ENCODE measurements at regions of chr3 and their contacts with region 1.

Region 1: DNA sequence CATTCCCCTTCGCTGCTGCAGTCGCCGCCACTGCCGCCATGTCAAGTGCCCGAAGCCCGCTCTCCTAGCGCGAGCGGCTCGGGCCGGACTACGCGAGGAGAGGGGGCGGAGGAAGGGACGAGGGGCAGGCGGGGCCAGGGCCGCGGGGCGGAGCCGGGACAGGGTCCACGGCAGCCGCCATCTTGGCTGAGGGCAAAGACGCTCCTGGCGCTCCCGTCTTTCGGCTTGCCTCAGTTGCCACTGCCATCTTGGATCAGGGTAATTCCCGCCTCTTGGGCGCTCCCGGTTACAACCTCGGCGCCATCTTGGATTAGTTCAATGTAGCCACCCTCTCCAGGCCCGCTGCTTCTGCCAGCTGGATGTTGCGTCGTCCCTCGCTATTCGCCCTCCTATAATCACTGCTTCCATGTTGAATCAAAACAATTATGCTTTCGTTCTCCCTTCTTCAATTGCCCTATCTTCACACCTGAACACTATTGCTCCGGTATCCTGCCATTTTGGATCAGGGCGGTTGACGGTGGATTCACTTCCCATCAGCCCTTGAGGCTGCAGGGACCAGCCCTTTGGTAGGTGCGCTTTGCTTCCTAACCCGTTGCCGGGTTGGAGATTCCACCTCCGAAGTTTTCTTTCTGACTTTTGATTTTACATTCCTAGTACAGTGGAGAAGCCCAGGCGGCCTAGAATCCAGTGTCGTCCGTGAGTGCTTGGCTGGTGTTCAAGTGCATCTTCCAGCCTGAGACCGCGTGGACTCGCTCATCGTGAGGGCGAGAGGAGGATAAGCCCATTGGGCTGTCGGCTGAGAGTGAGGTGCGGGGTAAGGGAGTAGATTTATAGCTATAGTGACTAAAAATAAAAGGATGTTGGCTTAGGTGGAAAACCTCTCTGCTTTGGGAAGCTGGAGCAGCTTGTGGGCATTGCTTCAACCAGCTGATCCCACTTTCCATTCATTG is at the start of gene HACD2:
- DNase-seq: peak; percentile 87 to 96 (median 90)
- ATAC-seq: peak; percentile 96
- H3K4me3 ChIP-seq: peak within 1 kb of the TSS; percentile 98
- H3K4me3 Mint-ChIP-seq: peak within 1 kb of the TSS in 3 of 10 donors; percentile 87 to 90 (median 89)
- H3K27ac ChIP-seq: peak within 1 kb of the TSS; percentile 79
- H3K27ac Mint-ChIP-seq: peak within 1 kb of the TSS; percentile 44 to 93 (median 83)
- H3K4me1 ChIP-seq: peaks cover 8 to 13% of the 10 kb centered on the region in 2 donors
- H3K4me1 Mint-ChIP-seq: peaks cover 14 to 32% (median 30%) of the 10 kb centered on the region in 7 donors
- H3K27me3 ChIP-seq: no peaks in the 10 kb centered on the region
- H3K27me3 Mint-ChIP-seq: no peaks in the 10 kb centered on the region
- total RNA-seq, gene HACD2: 15.9 to 28.3 (median 24.0) TPM

Region 2: DNA sequence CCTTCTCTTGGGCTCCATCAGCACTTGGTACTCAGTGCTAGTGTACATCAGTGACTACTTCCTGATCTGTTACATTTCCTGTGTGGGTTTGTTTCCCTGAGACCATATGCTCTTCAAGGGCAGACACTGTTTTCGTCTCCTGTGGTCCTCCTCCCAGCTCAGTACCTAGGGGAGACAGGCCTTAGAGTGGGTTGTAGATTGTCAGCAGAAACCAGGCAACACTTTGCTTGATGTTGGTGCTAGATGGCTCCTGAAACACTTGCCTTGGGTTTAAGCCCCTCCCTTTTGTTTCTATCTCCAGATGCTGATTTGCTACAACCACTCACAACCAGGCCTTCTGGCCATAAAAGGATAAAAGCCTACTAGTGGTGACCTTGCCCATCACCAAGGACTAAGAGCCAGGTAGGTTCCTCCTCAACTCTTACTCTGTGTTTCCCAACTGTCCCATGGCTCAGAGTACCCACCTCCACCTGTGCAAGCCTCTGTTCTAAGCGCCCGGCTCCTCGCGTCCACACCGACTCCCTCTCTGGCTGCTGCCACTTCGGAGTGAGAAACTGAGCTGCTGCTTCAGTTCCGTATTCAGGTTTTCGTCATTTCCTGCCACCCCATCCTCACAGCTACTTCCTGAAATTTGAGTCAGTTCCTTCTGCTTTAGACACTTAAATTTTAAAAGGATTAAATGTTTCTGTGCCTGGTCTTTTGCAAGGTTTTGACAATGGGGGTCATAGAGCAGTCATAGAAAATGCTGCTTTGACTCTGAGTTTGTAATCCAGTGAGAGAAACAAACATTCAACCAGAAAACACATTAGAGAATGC is 1924.7 kb before region 1 on chr3 and contains the start of gene HCLS1:
- CTCF ChIA-PET with region 1: no interaction called
- POLR2A ChIA-PET with region 1: interaction called, 4 read pairs
- intact Hi-C with region 1: loop called in 1 of 2 experiments (anchors 2 kb)
- DNase-seq: peak; percentile 60 to 87 (median 79)
- ATAC-seq: peak; percentile 87
- H3K4me3 ChIP-seq: peak within 1 kb of the TSS; percentile 90
- H3K4me3 Mint-ChIP-seq: peak within 1 kb of the TSS; percentile 82 to 99 (median 95)
- H3K27ac ChIP-seq: peak within 1 kb of the TSS; percentile 90
- H3K27ac Mint-ChIP-seq: peak within 1 kb of the TSS; percentile 96 to 100 (median 99)
- H3K4me1 ChIP-seq: peaks cover 34 to 41% of the 10 kb centered on the region in 2 donors
- H3K4me1 Mint-ChIP-seq: peaks cover 41 to 68% (median 57%) of the 10 kb centered on the region in 7 donors
- H3K27me3 ChIP-seq: no peaks in the 10 kb centered on the region
- H3K27me3 Mint-ChIP-seq: no peaks in the 10 kb centered on the region
- total RNA-seq, gene HCLS1: 275 to 357 (median 311) TPM

Region 3: GRCh38 chr3:122793568-122794416 is 791.5 kb before region 1 on chr3 and contains the start of gene HSPBAP1:
- CTCF ChIA-PET with region 1: no interaction called
- POLR2A ChIA-PET with region 1: no interaction called
- intact Hi-C with region 1: loop called in 1 of 2 experiments (anchors 1 kb)
- DNase-seq: peak; percentile 71 to 90 (median 86)
- ATAC-seq: peak; percentile 77
- H3K4me3 ChIP-seq: peak within 1 kb of the TSS; percentile 83
- H3K4me3 Mint-ChIP-seq: peak within 1 kb of the TSS in 5 of 10 donors; percentile 91 to 97 (median 95)
- H3K27ac ChIP-seq: peak within 1 kb of the TSS; percentile 82
- H3K27ac Mint-ChIP-seq: peak within 1 kb of the TSS in 6 of 9 donors; percentile 79 to 99 (median 96)
- H3K4me1 ChIP-seq: peaks cover 22 to 34% of the 10 kb centered on the region in 2 donors
- H3K4me1 Mint-ChIP-seq: peaks cover 20 to 29% (median 27%) of the 10 kb centered on the region in 7 donors
- H3K27me3 ChIP-seq: no peaks in the 10 kb centered on the region
- H3K27me3 Mint-ChIP-seq: no peaks in the 10 kb centered on the region
- total RNA-seq, gene HSPBAP1: 9.0 to 31.5 (median 23.3) TPM

Region 4: DNA sequence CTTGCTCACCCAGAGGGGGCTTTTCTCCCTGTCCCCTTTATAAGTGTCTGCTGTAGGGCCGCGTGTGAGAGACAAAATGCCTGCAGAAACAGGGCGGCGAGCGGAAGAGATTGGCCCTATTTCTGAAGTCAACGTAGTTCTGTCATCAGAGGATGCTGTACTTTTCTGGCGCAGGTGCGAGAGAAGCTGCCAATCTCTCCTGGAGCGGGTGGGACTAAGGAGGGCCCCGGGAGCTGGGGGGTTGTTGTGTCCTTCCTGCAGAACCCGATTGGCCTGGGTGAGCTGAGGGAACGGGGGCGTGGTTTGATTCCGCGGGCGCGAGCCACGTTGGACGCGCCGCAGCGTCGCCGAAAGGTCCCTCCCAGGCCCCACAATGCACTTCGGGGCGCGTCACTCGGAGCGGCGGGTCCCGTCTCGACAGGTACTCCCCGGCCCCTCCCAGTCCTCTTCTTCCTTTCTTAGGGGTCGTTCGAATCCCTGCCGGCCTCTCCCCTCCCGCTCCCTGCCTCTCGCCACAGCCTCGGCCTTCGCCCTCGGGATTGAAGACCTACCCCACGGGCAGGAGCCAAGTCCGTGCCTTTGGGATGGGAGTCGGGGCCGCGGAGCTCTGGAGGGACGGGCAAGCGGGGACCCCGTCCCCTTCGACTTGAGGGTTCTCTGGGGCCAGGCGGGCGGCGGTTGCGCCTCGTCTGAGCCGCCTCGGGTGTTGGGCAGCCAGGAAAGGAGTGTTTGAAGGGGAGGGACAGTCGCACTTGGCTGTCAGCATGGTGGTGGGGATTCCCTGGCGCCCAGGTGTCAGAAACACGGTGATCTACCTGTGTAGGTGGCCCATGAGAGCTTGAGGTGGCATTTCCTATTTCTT is 383.5 kb before region 1 on chr3 and contains the start of gene SEC22A:
- CTCF ChIA-PET with region 1: no interaction called
- POLR2A ChIA-PET with region 1: interaction called, 11 read pairs
- intact Hi-C with region 1: loop called (anchors 1 kb)
- DNase-seq: peak; percentile 89 to 99 (median 97)
- ATAC-seq: peak; percentile 97
- H3K4me3 ChIP-seq: peak within 1 kb of the TSS; percentile 90
- H3K4me3 Mint-ChIP-seq: peak within 1 kb of the TSS; percentile 82 to 98 (median 92)
- H3K27ac ChIP-seq: peak within 1 kb of the TSS; percentile 99
- H3K27ac Mint-ChIP-seq: peak within 1 kb of the TSS; percentile 97 to 100 (median 99)
- H3K4me1 ChIP-seq: peaks cover 12% of the 10 kb centered on the region in 2 donors
- H3K4me1 Mint-ChIP-seq: peaks cover 13 to 41% (median 31%) of the 10 kb centered on the region in 7 donors
- H3K27me3 ChIP-seq: no peaks in the 10 kb centered on the region
- H3K27me3 Mint-ChIP-seq: peaks cover 0 to 9% (median 2%) of the 10 kb centered on the region in 5 donors
- total RNA-seq, gene SEC22A: 15.0 to 20.1 (median 17.1) TPM

Region 5: GRCh38 chr3:123535580-123535979 is 49.7 kb before region 1 on chr3:
- CTCF ChIA-PET with region 1: no interaction called
- POLR2A ChIA-PET with region 1: no interaction called
- intact Hi-C with region 1: no loop called
- DNase-seq: no peak
- ATAC-seq: no peak
- H3K4me3 ChIP-seq: no peak overlapping the region
- H3K4me3 Mint-ChIP-seq: no peak overlapping the region
- H3K27ac ChIP-seq: no peak overlapping the region
- H3K27ac Mint-ChIP-seq: no peak overlapping the region
- H3K4me1 ChIP-seq: no peaks in the 10 kb centered on the region
- H3K4me1 Mint-ChIP-seq: peaks cover 0 to 23% (median 7%) of the 10 kb centered on the region in 7 donors
- H3K27me3 ChIP-seq: no peaks in the 10 kb centered on the region
- H3K27me3 Mint-ChIP-seq: no peaks in the 10 kb centered on the region

Region 6: GRCh38 chr3:123960781-123961507 is 375.7 kb after region 1 on chr3 and contains the start of gene CCDC14:
- CTCF ChIA-PET with region 1: no interaction called
- POLR2A ChIA-PET with region 1: no interaction called
- intact Hi-C with region 1: loop called (anchors 1 to 5 kb)
- DNase-seq: peak; percentile 43 to 81 (median 60)
- ATAC-seq: peak; percentile 91
- H3K4me3 ChIP-seq: peak within 1 kb of the TSS; percentile 85
- H3K4me3 Mint-ChIP-seq: peak within 1 kb of the TSS; percentile 93 to 98 (median 96)
- H3K27ac ChIP-seq: peak within 1 kb of the TSS; percentile 78
- H3K27ac Mint-ChIP-seq: peak within 1 kb of the TSS; percentile 82 to 96 (median 91)
- H3K4me1 ChIP-seq: peaks cover 0 to 12% of the 10 kb centered on the region in 2 donors
- H3K4me1 Mint-ChIP-seq: peaks cover 12 to 35% (median 30%) of the 10 kb centered on the region in 7 donors
- H3K27me3 ChIP-seq: no peaks in the 10 kb centered on the region
- H3K27me3 Mint-ChIP-seq: peaks cover 0 to 30% (median 8%) of the 10 kb centered on the region in 5 donors
- total RNA-seq, gene CCDC14: 24.6 to 48.1 (median 37.3) TPM